GM18951 (cell line): ENCODE measurements at regions of chr3 and their contacts with region 1.

Region 1: GRCh38 chr3:196274585-196274984 is 12.9 kb downstream of the PCYT1A start:
- POLR2A ChIP-seq: no peak

Region 2: GRCh38 chr3:196168808-196169391 is 105.7 kb before region 1 on chr3:
- in situ Hi-C with region 1: no loop called
- POLR2A ChIP-seq: no peak

Region 3: GRCh38 chr3:196684548-196685407 is 410.2 kb after region 1 on chr3:
- in situ Hi-C with region 1: loop called (anchors 25 kb)
- POLR2A ChIP-seq: no peak